Naive thymus-derived CD4-positive, alpha-beta T cell (primary cell): ENCODE measurements at regions of chr9 and their contacts with region 1.

Region 1: DNA sequence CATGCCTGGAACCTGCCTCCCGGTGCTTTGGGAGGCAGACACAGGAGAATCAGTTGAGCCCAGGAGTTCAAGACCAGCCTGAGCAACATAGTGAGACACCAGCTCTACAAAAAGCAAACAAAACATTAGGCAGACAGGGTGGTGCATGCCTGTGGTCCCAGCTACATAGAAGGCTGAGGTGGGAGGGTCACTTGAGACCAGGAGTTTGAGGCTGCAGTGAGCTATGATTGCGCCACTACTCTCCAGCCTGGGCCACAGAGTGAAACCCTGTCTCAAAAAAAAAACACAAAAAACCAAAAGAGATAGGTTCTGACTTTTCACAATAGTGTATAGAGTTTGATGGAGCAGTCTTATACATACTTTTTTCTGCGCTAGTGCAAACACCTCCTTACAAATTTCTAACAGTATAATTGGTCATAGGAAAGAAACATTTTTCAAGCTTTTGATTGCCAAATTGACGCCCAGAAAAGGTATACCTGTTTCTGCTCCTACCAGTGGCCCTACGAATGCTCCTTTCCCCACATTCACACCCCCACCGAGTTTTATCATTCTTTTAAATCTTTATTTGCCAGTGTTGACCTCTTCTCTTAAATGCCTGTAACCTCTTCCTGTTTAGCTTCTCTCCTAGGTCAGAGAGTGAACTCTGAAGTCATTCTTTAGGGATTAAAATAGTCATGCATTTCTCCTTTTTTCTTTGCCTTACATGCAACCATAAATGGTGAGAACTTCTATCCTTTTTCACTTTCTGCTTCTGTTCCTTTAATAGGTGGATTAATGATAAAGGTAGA is 7.5 kb downstream of the DOCK8 start:
- DNase-seq: no peak
- ATAC-seq: peak; percentile 45
- H3K4me3 ChIP-seq: no peak overlapping the region
- H3K4me3 Mint-ChIP-seq: peak overlapping the region in 2 of 10 donors; percentile 4 to 79
- H3K27ac ChIP-seq: no peak overlapping the region
- H3K27ac Mint-ChIP-seq: peak overlapping the region in 1 of 9 donors; percentile 78
- H3K4me1 ChIP-seq: peaks cover 0 to 6% of the 10 kb centered on the region in 2 donors
- H3K4me1 Mint-ChIP-seq: peaks cover 0 to 31% (median 10%) of the 10 kb centered on the region in 7 donors
- H3K27me3 ChIP-seq: no peaks in the 10 kb centered on the region
- H3K27me3 Mint-ChIP-seq: peaks cover 2 to 17% (median 4%) of the 10 kb centered on the region in 5 donors

Region 2: GRCh38 chr9:242461-243080 is 20.4 kb after region 1 on chr9:
- CTCF ChIA-PET with region 1: no interaction called
- POLR2A ChIA-PET with region 1: no interaction called
- intact Hi-C with region 1: loop called in 1 of 2 experiments (anchors 2 kb)
- DNase-seq: no peak
- ATAC-seq: no peak
- H3K4me3 ChIP-seq: no peak overlapping the region
- H3K4me3 Mint-ChIP-seq: peak overlapping the region in 1 of 10 donors; percentile 53
- H3K27ac ChIP-seq: no peak overlapping the region
- H3K27ac Mint-ChIP-seq: peak overlapping the region in 1 of 9 donors; percentile 73
- H3K4me1 ChIP-seq: peaks cover 3 to 9% of the 10 kb centered on the region in 2 donors
- H3K4me1 Mint-ChIP-seq: peaks cover 0 to 49% (median 5%) of the 10 kb centered on the region in 7 donors
- H3K27me3 ChIP-seq: no peaks in the 10 kb centered on the region
- H3K27me3 Mint-ChIP-seq: peaks cover 0 to 4% (median 0%) of the 10 kb centered on the region in 5 donors